Activated naive CD4-positive, alpha-beta T cell treated with anti-CD3 and anti-CD28 coated beads for 36 hours (primary cell): ENCODE measurements at regions of chrX and their contacts with region 1.

Region 1: GRCh38 chrX:54639346-54640102 is 109.5 kb downstream of the GNL3L start:
- DNase-seq: peak; percentile 97
- H3K4me3 Mint-ChIP-seq: peak overlapping the region; percentile 84
- H3K27ac Mint-ChIP-seq: peak overlapping the region; percentile 99
- H3K4me1 Mint-ChIP-seq: peaks cover 5% of the 10 kb centered on the region
- H3K27me3 Mint-ChIP-seq: no peaks in the 10 kb centered on the region

Region 2: DNA sequence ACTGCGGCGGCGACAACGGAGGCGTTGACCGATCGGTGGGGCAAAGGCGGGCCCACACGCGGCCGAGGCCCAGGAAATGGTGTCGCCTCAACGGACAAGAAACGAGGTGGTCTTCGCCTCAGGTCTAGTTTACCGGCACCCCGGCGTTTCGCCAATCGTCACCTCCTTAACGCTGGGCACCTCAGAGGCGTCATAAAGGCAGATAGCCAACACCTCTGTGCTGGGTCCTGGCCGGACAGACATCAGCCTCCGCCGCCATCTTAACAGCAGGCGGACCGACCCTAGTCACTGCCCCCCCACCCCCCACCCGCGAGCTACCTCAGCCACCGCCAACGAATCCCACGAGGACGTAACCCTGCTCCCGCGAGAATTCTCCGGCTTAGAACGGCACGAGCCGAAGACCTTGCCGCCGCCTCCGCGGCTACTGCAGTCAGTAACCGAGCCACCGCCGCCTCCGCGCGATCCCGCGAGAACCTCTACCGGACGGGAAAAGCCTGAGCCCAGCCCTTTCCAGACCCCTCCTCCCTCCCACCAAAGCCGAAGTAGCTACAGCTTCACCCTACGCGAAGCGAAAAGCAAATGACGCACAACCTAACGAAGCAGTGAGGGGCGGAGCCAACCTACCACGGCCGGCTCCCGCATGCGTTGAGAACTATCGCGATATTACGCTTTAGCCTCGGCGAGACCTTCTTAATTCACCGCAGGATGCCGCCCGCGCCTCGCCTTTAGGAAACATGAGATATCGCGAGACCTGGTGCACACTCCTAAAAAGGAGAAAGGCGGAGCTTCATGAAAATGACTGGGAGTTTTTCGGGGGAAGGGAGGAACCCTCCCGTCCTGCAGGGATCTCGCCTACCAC is 955.7 kb before region 1 on chrX:
- CTCF ChIA-PET with region 1: no interaction called
- intact Hi-C with region 1: loop called (anchors 1 kb)
- DNase-seq: peak; percentile 96
- H3K4me3 Mint-ChIP-seq: peak overlapping the region; percentile 92
- H3K27ac Mint-ChIP-seq: peak overlapping the region; percentile 94
- H3K4me1 Mint-ChIP-seq: peaks cover 27% of the 10 kb centered on the region
- H3K27me3 Mint-ChIP-seq: no peaks in the 10 kb centered on the region

Region 3: DNA sequence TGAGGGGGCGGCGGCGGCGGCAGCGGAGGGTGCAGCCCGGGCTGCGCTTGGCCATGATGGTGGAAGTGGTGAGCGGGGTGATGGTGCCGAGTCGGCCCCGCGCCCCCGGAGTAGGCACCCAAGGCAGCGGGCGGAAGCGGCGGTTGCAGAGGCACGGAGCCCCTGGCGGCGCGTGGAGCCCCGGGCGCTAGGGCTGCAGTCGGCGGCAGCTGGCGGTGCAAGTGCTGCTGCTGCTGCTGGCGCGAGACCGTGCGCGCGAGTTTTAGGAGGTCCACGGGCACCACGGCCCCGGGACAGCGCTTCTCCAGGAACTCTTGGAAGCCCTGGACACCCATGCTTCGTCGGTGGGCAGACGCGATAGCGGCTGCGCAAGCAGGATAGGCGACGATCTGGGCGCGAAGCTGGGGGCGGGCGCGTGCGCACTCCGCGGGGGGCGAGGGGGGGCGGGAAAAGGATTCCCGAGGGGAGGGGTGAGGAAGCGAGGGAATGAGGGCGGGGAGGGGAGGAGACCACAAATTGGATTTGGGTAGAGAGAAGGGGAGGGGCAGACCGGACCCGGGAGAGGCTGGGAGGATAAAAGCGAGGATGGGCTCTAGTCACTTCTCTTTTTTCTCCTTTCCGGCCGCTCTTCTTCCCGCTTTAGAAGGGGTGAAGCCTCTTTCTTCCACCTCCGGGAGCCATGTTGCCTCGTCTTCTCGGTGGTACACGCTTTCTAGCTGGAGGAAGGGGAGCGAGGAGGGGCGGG is 456.5 kb before region 1 on chrX and contains the start of gene FAM120C:
- CTCF ChIA-PET with region 1: no interaction called
- intact Hi-C with region 1: loop called (anchors 1 kb)
- DNase-seq: peak; percentile 66
- H3K4me3 Mint-ChIP-seq: peak within 1 kb of the TSS; percentile 75
- H3K27ac Mint-ChIP-seq: peak within 1 kb of the TSS; percentile 84
- H3K4me1 Mint-ChIP-seq: peaks cover 38% of the 10 kb centered on the region
- H3K27me3 Mint-ChIP-seq: no peaks in the 10 kb centered on the region
- total RNA-seq, gene FAM120C: 4.3 to 5.9 TPM

Region 4: GRCh38 chrX:54423161-54423888 is 216.2 kb before region 1 on chrX:
- CTCF ChIA-PET with region 1: no interaction called
- intact Hi-C with region 1: no loop called
- DNase-seq: peak; percentile 25
- H3K4me3 Mint-ChIP-seq: no peak overlapping the region
- H3K27ac Mint-ChIP-seq: no peak overlapping the region
- H3K4me1 Mint-ChIP-seq: no peaks in the 10 kb centered on the region
- H3K27me3 Mint-ChIP-seq: no peaks in the 10 kb centered on the region

Region 5: DNA sequence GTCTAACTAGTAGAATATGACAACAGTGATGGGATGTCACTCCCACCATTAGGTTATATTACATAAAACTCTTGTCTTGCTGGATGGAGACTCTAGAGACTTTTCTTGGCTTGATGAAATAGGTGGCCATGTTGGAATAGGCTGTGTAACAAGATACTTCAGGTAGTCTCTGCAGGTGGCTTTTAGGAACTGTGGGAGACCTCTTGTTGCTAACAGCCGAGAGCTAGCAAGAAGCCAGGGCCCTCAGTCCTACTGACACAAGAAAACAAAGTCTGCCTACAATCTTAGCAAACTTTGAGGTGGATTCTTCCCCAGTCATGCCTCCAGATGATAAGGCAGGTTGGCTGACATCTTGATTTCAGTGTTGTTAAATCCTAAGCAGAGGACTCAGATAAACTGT is 37.0 kb before region 1 on chrX:
- CTCF ChIA-PET with region 1: no interaction called
- intact Hi-C with region 1: no loop called
- DNase-seq: no peak
- H3K4me3 Mint-ChIP-seq: no peak overlapping the region
- H3K27ac Mint-ChIP-seq: no peak overlapping the region
- H3K4me1 Mint-ChIP-seq: no peaks in the 10 kb centered on the region
- H3K27me3 Mint-ChIP-seq: no peaks in the 10 kb centered on the region

Region 6: GRCh38 chrX:54786962-54787361 is 147.4 kb after region 1 on chrX:
- CTCF ChIA-PET with region 1: no interaction called
- intact Hi-C with region 1: loop called (anchors 1 kb)
- DNase-seq: peak; percentile 59
- H3K4me3 Mint-ChIP-seq: no peak overlapping the region
- H3K27ac Mint-ChIP-seq: no peak overlapping the region
- H3K4me1 Mint-ChIP-seq: no peaks in the 10 kb centered on the region
- H3K27me3 Mint-ChIP-seq: no peaks in the 10 kb centered on the region

Region 7: GRCh38 chrX:54999717-55000598 is 360.4 kb after region 1 on chrX and contains the start of gene APEX2:
- CTCF ChIA-PET with region 1: no interaction called
- intact Hi-C with region 1: loop called (anchors 1 kb)
- DNase-seq: peak; percentile 89
- H3K4me3 Mint-ChIP-seq: peak within 1 kb of the TSS; percentile 80
- H3K27ac Mint-ChIP-seq: peak within 1 kb of the TSS; percentile 90
- H3K4me1 Mint-ChIP-seq: peaks cover 20% of the 10 kb centered on the region
- H3K27me3 Mint-ChIP-seq: no peaks in the 10 kb centered on the region
- total RNA-seq, gene APEX2: 34.7 to 36.3 TPM

Region 8: DNA sequence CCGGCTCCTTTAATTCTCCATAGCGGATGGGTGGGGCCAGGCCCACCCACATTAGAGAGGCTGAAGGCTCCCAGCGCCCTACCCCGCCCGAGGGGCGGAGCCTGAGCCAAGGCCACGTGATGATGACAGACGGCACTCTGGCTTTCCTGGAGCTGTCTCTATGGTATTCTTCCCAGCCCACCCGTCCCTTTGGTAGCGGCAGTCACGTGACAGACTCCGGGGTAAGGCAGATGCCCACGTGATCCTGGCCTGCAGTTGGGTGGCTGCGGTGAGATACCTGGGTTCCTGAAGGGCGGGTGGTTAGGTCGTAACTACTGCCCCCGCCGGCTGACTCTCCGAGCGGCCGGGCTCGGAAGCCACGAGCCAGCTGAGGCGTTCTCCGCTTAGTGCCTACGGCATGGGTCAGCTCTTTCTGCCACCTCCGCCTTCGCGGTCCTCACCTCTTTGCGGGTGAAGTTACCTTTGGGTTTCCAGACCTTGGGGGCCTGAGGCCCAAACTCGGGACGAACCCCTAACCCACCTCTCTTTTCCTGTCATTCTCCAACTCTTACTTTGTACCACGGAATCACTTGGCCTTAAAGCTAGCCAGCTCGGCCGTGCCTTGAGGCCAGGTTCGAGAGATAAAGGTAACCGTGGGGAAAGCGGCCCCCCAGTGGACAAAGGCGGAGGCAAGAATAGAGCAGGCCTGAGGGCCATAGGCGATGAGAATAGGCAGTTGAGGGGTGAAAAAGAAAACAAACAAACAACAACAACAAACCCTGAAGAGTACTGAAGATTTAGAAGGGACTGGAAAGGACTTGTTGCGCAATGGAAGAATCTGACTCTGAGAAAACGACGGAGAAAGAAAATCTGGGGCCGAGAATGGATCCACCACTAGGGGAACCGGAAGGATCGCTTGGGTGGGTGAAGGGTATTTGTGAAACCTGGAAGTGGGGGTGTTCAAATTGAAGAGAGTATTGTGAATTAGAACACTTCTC is 1078.3 kb after region 1 on chrX and contains the start of gene RRAGB:
- CTCF ChIA-PET with region 1: no interaction called
- intact Hi-C with region 1: loop called (anchors 1 kb)
- DNase-seq: peak; percentile 91
- H3K4me3 Mint-ChIP-seq: peak within 1 kb of the TSS; percentile 80
- H3K27ac Mint-ChIP-seq: peak within 1 kb of the TSS; percentile 91
- H3K4me1 Mint-ChIP-seq: peaks cover 32% of the 10 kb centered on the region
- H3K27me3 Mint-ChIP-seq: no peaks in the 10 kb centered on the region
- total RNA-seq, gene RRAGB: 3.4 to 4.0 TPM